ENCODE measurements at regions of chr2 and their contacts with region 1.

Region 1: DNA sequence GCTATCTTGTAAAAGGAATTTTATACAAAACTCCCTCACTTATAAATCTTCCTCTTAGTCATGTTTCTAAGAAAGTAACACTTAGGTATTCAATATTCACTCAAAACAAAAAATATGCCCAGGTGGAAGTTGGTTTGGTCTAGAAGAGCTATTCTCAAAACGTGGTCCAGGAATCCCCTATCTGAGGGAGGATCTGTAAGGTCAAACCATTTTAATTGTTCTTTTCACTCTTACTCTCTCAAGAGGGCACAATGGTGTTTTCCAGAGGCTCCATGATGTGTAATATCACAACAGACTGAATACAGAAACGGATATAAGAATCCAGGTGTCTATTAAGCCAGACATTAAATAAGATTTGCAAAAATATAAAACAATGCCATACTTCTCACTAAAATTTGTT is 9.9 kb downstream of the MOB1A start:
- DNase-seq: no peak
- H3K4me3 Mint-ChIP-seq: no peak overlapping the region
- H3K27ac Mint-ChIP-seq: peak overlapping the region; percentile 74
- H3K4me1 Mint-ChIP-seq: peaks cover 35% of the 10 kb centered on the region
- H3K27me3 Mint-ChIP-seq: no peaks in the 10 kb centered on the region

Region 2: DNA sequence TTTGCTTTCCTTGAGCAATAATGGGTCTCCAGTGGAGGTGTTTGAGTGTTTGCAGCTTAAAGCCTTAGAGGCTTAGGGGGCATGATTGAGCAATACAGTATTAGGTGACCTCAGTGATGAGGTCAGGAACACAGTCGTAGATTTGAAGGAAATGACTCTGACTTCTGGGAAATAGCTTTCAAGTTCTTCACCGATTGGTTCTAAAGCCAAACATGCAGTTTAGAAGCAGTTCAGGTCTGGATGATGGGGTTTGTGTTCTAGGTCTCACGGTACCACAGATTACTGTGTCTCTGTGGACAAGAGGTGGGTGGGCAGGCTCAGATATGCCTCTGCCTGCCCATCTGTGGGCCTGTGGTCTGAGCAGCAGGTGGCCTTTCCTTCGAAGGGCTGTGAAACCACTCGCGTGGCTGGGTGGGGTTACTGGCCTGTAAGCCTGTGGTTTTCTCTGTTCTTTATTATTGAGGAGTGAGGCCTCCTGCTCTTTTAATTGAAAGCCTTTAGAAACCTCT is 37.5 kb after region 1 on chr2:
- CTCF ChIA-PET with region 1: interaction called, 3 read pairs
- POLR2A ChIA-PET with region 1: interaction called, 3 read pairs
- intact Hi-C with region 1: loop called (anchors 5 kb)
- DNase-seq: peak; percentile 74
- H3K4me3 Mint-ChIP-seq: peak overlapping the region; percentile 66
- H3K27ac Mint-ChIP-seq: peak overlapping the region; percentile 98
- H3K4me1 Mint-ChIP-seq: peaks cover 67% of the 10 kb centered on the region
- H3K27me3 Mint-ChIP-seq: no peaks in the 10 kb centered on the region

Region 3: DNA sequence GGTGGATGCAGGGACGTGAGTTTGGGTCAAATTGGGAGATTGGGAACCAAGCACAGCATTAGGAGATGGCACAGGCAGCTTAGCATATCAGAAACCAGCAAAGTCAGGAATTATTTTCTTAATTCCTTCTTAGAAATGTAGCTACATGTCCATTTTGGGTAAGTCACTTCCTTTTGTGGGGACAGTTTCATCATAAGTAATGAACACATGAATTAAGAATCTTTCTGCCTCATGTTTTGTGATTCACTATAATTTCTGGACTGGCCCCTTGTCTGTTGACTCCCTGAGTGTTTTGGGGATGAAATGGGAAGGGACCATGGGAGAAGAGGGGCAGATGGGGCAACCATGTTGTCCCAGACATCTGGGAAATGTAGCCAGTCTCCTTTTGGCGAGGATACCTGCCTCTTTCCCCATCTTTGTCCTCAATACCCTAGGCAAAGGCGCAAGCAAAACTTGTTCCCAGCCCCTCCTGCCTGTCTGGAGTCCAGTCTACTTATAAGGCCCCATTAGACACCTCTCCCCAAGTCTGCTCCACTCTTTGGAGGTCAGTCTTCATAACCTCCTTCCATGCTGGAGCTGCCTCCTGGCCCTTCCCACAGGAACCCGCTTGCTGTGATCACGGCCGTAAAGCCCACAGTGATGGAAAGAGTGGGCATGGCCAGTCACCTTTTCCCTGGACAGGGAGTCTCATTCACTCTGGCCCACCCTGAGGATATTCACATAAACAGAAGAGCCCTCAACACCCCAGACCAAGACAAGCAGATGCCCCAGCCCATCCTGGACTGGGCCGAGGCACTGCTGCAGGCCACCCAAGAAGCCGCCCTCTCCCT is 55.4 kb after region 1 on chr2:
- CTCF ChIA-PET with region 1: no interaction called
- POLR2A ChIA-PET with region 1: no interaction called
- intact Hi-C with region 1: no loop called
- DNase-seq: no peak
- H3K4me3 Mint-ChIP-seq: no peak overlapping the region
- H3K27ac Mint-ChIP-seq: peak overlapping the region; percentile 30
- H3K4me1 Mint-ChIP-seq: peaks cover 4% of the 10 kb centered on the region
- H3K27me3 Mint-ChIP-seq: no peaks in the 10 kb centered on the region

Measured in activated CD4-positive, alpha-beta memory T cell treated with anti-CD3 and anti-CD28 coated beads for 36 hours (primary cell).